IMR-90 (cell line): ENCODE measurements at regions of chr1 and their contacts with region 1.

Region 1: GRCh38 chr1:54488779-54489626 is 59.0 kb upstream of the ACOT11 start:
- DNase-seq: peak; percentile 49
- ATAC-seq: peak; percentile 64
- H3K4me3 ChIP-seq: peak overlapping the region; percentile 46
- H3K27ac ChIP-seq: peak overlapping the region; percentile 88
- H3K4me1 ChIP-seq: peaks cover 14% of the 10 kb centered on the region
- H3K27me3 ChIP-seq: no peaks in the 10 kb centered on the region; the same call in 1 of the 2 replicates
- CTCF ChIP-seq: peak; percentile 92
- POLR2A ChIP-seq: peak; percentile 59
- RAD21 ChIP-seq: peak; percentile 90

Region 2: GRCh38 chr1:53860967-53861411 is 628.0 kb before region 1 on chr1:
- CTCF ChIA-PET with region 1: no interaction called
- POLR2A ChIA-PET with region 1: no interaction called
- dilution Hi-C with region 1: no loop called
- in situ Hi-C with region 1: loop called (anchors 25 kb)
- intact Hi-C with region 1: loop called (anchors 2 kb)
- DNase-seq: peak; percentile 61
- ATAC-seq: peak; percentile 87
- H3K4me3 ChIP-seq: no peak overlapping the region
- H3K27ac ChIP-seq: no peak overlapping the region
- H3K4me1 ChIP-seq: no peaks in the 10 kb centered on the region
- H3K27me3 ChIP-seq: no peaks in the 10 kb centered on the region
- CTCF ChIP-seq: peak; percentile 81
- POLR2A ChIP-seq: no peak
- RAD21 ChIP-seq: peak; percentile 80

Region 3: GRCh38 chr1:54070171-54070837 is 418.7 kb before region 1 on chr1:
- CTCF ChIA-PET with region 1: interaction called, 5 read pairs
- POLR2A ChIA-PET with region 1: no interaction called
- dilution Hi-C with region 1: no loop called
- in situ Hi-C with region 1: no loop called
- intact Hi-C with region 1: loop called (anchors 1 kb)
- DNase-seq: peak; percentile 67
- ATAC-seq: peak; percentile 97
- H3K4me3 ChIP-seq: no peak overlapping the region
- H3K27ac ChIP-seq: no peak overlapping the region
- H3K4me1 ChIP-seq: peaks cover 3% of the 10 kb centered on the region; the same call in 1 of the 2 replicates
- H3K27me3 ChIP-seq: no peaks in the 10 kb centered on the region
- CTCF ChIP-seq: peak; percentile 99
- POLR2A ChIP-seq: no peak
- RAD21 ChIP-seq: peak; percentile 88

Region 4: GRCh38 chr1:54199765-54200518 is 289.1 kb before region 1 on chr1 and contains the starts of genes CYB5RL and MRPL37:
- CTCF ChIA-PET with region 1: no interaction called
- POLR2A ChIA-PET with region 1: no interaction called
- dilution Hi-C with region 1: no loop called
- in situ Hi-C with region 1: no loop called
- intact Hi-C with region 1: loop called (anchors 1 kb)
- DNase-seq: peak; percentile 97
- ATAC-seq: peak; percentile 99
- H3K4me3 ChIP-seq: peak within 1 kb of the TSS; percentile 73
- H3K27ac ChIP-seq: peak within 1 kb of the TSS; percentile 41
- H3K4me1 ChIP-seq: peaks cover 4% of the 10 kb centered on the region
- H3K27me3 ChIP-seq: no peaks in the 10 kb centered on the region
- CTCF ChIP-seq: no peak
- POLR2A ChIP-seq: peak; percentile 84
- RAD21 ChIP-seq: 0 out of 2 replicates have a peak, but pooled peaks have one; percentile 1
- total RNA-seq, gene CYB5RL: 3.3 and 3.8 TPM in 2 replicates
- total RNA-seq, gene MRPL37: 111 and 132 TPM in 2 replicates

Region 5: DNA sequence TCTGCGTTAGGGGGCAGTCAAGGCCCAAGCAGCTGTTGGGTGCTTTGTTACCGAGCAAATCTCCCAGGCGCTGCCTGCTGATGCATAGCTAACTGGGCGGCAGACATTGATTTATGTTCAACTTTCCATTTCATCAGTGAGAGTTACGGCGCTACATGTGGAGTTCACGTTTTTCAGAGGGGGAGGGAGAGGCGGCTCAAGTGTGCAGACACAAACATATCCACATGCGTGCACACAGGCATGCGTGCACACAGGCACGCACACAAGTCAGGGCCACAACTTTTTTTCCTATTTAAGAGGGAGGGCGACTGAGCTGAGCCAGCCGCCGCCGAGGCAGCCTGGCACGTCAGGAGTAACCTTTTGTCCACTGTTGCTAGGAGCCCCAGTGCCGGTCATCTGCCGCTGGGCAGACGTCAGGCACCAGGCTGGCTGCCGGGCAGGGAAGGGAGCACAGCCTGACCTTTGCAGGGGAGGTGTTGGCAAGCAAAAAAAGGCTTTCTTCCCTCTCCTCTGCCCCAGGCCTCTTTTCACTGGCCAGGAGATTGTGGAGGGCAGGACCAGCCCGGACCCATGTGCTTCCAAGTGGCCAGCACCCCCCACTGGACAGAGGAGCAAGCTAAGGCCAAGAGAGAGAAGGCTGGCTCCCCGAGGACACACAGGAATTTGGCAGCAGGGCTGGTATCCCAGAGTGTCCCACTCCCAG is 215.8 kb before region 1 on chr1:
- CTCF ChIA-PET with region 1: interaction called, 7 read pairs
- POLR2A ChIA-PET with region 1: no interaction called
- dilution Hi-C with region 1: no loop called
- in situ Hi-C with region 1: no loop called
- intact Hi-C with region 1: loop called (anchors 1 kb)
- DNase-seq: peak; percentile 93
- ATAC-seq: peak; percentile 81
- H3K4me3 ChIP-seq: peak overlapping the region; percentile 7; the same call in 1 of the 2 replicates
- H3K27ac ChIP-seq: peak overlapping the region; percentile 63
- H3K4me1 ChIP-seq: peaks cover 51% of the 10 kb centered on the region
- H3K27me3 ChIP-seq: no peaks in the 10 kb centered on the region
- CTCF ChIP-seq: peak; percentile 87
- POLR2A ChIP-seq: peak; percentile 13
- RAD21 ChIP-seq: peak; percentile 89

Region 6: GRCh38 chr1:54335755-54336108 is 153.3 kb before region 1 on chr1:
- CTCF ChIA-PET with region 1: no interaction called
- POLR2A ChIA-PET with region 1: no interaction called
- dilution Hi-C with region 1: no loop called
- in situ Hi-C with region 1: no loop called
- intact Hi-C with region 1: loop called (anchors 2 kb)
- DNase-seq: peak; percentile 95
- ATAC-seq: peak; percentile 69
- H3K4me3 ChIP-seq: peak overlapping the region; percentile 13
- H3K27ac ChIP-seq: peak overlapping the region; percentile 97
- H3K4me1 ChIP-seq: peaks cover 50% of the 10 kb centered on the region
- H3K27me3 ChIP-seq: no peaks in the 10 kb centered on the region
- CTCF ChIP-seq: no peak
- POLR2A ChIP-seq: no peak
- RAD21 ChIP-seq: peak; percentile 30; the same call in 1 of the 2 replicates

Region 7: DNA sequence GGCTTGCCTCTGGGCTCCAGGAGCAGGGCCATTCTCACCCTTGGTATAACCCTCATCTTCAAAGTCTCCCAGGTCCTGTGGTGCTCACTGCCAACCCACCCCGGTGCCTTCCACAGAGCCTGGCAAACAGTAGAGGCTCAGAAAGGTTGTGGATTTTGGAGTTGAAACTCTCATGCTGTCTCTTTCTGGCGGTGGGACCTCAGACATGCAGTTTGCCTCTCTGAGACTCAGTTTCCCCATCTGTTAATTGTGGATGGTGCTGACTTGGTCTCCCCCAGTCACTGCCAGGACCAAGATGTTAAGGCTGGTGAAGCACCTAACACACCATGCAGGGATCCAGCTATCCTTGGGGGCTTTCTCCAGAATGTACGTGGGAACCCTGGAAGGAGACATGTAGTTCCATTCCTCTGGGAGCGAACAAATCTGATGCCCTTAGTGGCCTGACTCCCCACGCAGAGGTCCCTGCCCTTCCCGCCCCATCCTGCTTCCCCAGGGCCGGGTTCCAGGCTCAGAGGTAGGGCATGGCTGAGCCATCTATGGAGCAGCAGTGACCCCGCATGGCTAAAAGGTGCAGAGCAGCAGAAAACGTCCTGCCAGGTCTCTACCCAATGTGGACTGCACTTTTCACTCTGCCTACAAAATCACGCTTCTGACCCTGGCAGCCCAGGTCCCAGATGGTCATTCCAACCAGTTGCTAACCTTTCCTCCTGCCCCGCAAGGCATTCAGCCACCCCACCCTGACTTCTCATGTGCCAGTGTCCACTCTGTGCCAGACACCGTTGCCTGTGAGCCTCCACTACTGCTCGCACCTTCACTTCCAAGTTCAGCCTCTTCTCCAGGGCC is 321.3 kb after region 1 on chr1:
- CTCF ChIA-PET with region 1: no interaction called
- POLR2A ChIA-PET with region 1: no interaction called
- dilution Hi-C with region 1: no loop called
- in situ Hi-C with region 1: no loop called
- intact Hi-C with region 1: loop called (anchors 2 kb)
- DNase-seq: peak; percentile 37
- ATAC-seq: peak; percentile 99
- H3K4me3 ChIP-seq: no peak overlapping the region
- H3K27ac ChIP-seq: no peak overlapping the region
- H3K4me1 ChIP-seq: no peaks in the 10 kb centered on the region
- H3K27me3 ChIP-seq: peaks cover 32% of the 10 kb centered on the region
- CTCF ChIP-seq: peak; percentile 94
- POLR2A ChIP-seq: peak; percentile 44; the same call in 1 of the 2 replicates
- RAD21 ChIP-seq: peak; percentile 96